ENCODE measurements at regions of chr7 and their contacts with region 1.

Region 1: DNA sequence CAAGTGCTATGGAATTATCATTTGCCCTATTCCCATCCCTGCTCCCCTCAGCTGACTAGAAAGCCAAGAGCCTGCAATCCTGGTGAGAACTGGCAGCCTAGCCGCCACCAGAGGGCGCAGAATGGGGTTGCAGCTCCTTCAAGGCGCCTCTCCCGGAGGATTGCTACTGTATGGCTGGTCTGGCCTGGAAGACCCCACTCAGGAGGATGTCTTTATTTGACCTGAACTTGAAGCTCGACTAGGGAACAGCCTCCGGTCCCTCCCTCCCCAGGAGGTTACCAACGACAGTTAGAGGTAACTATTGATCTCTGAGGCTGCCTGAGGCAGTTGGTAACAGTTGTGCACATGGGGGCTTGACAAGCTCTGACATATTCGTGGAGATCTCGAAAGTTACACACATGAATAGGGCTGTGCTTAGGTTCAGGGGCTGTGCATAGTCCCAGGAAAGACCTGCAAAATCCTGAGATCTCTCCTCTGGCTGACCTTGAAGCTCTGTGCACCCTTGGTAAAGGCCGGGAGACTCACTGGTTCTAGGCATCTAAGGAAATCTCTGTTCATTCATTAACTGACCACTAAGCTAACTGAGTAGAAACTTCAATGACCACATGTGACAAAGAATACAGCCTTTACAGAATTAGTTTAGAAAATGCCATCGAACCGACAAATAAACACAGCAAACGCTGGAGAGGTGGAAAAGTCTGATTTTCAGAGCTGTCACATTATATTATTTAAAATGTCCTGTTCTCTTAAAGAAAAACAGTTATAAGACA is 65.7 kb downstream of the TSPAN12 start:
- DNase-seq: peak; percentile 33
- H3K4me3 Mint-ChIP-seq: no peak overlapping the region
- H3K27ac Mint-ChIP-seq: no peak overlapping the region
- H3K4me1 Mint-ChIP-seq: no peaks in the 10 kb centered on the region
- H3K27me3 Mint-ChIP-seq: peaks cover 10% of the 10 kb centered on the region

Region 2: GRCh38 chr7:120725376-120726039 is 66.8 kb before region 1 on chr7:
- intact Hi-C with region 1: no loop called
- DNase-seq: no peak
- H3K4me3 Mint-ChIP-seq: no peak overlapping the region
- H3K27ac Mint-ChIP-seq: no peak overlapping the region
- H3K4me1 Mint-ChIP-seq: no peaks in the 10 kb centered on the region
- H3K27me3 Mint-ChIP-seq: no peaks in the 10 kb centered on the region

Region 3: GRCh38 chr7:121081327-121081936 is 289.2 kb after region 1 on chr7:
- intact Hi-C with region 1: loop called (anchors 2 kb)
- DNase-seq: no peak
- H3K4me3 Mint-ChIP-seq: no peak overlapping the region
- H3K27ac Mint-ChIP-seq: no peak overlapping the region
- H3K4me1 Mint-ChIP-seq: peaks cover 3% of the 10 kb centered on the region
- H3K27me3 Mint-ChIP-seq: peaks cover 28% of the 10 kb centered on the region

Region 4: GRCh38 chr7:121107923-121108498 is 315.7 kb after region 1 on chr7:
- intact Hi-C with region 1: loop called (anchors 1 kb)
- DNase-seq: no peak
- H3K4me3 Mint-ChIP-seq: no peak overlapping the region
- H3K27ac Mint-ChIP-seq: no peak overlapping the region
- H3K4me1 Mint-ChIP-seq: no peaks in the 10 kb centered on the region
- H3K27me3 Mint-ChIP-seq: peaks cover 15% of the 10 kb centered on the region

Measured in activated T-helper 2 cell treated with anti-CD3 and anti-CD28 coated beads, Interferon-gamma antibody, Interleukin-2, Interleukin-4, amounts not matched to agents 10 μg/mL and 5 μg/mL and 100 μg/mL, durations not matched to agents 14 hours and 24 hours and 36 hours (primary cell).